ENCODE measurements at regions of chr15 and their contacts with region 1.

Region 1: DNA sequence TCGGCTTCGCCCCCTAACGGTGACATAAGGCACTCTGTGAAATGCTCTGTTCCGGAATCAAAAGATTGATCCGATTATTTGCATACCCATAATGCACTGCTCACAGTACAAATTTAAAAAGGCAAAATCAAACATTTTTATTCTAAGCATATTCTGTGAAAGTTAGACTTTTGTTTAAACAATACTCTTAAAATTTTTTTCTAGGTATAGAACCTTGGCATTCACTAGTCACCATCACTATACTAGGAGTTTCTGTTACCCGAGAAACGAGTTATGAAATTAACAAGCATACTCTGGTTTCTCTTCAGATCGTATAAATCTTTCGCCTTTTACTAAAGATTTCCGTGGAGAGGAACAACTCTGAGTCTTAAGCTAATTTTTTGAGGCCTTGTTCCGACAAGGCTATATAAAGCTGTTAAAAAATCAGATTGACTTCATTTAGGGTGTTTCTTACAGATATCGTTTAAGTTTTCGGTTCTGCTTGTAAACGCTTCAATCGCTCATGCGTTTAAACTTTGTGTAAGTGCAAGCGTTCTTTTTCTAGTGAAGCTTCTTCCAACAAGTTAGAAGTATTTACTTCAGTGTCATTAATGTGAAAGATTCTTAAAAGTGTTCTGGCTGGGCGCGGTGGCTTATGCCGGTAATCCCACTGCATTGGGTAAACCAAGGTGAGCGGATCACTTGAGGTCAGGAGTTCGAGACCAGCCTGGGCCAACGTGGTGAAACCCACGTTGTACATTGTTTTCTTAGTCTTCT is at the start of gene RNU5B-1:
- DNase-seq: peak; percentile 76 to 93 (median 80)
- ATAC-seq: peak; percentile 92
- H3K4me3 ChIP-seq: peak within 1 kb of the TSS; percentile 28
- H3K27ac ChIP-seq: peak within 1 kb of the TSS; percentile 93
- H3K4me1 ChIP-seq: peaks cover 14 to 15% of the 10 kb centered on the region in 2 experiments
- H3K27me3 ChIP-seq: no peaks in the 10 kb centered on the region
- CTCF ChIP-seq: peak; percentile 72 to 92 (median 88)
- EP300 ChIP-seq: peak; percentile 72
- POLR2A ChIP-seq: peak; percentile 100
- RAD21 ChIP-seq: peak; percentile 5 to 27; a peak in 3 of 4 replicates
- polyA plus RNA-seq, gene RNU5B-1: not detected

Region 2: DNA sequence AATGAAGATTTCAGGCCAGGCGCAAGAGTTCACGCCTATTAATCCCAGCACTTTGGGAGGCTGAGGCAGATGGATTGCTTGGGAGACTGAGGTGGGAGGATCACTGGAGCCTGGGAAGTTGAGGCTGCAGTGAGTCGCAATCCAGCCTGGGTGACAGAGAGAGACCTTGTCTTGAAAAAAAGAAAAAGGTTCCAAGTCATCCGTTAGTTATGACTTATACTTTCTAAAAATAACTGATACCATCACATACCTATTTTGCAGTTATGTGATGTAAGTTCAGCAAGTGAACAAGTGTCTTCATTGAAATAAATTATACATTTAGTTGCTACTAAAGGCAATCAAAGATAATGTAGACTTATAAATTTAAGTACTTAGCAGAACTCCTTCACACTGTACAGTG is 141.5 kb before region 1 on chr15:
- CTCF ChIA-PET with region 1: no interaction called
- POLR2A ChIA-PET with region 1: interaction called, 14 read pairs
- in situ Hi-C with region 1: no loop called
- intact Hi-C with region 1: no loop called
- DNase-seq: no peak
- ATAC-seq: no peak
- H3K4me3 ChIP-seq: no peak overlapping the region
- H3K27ac ChIP-seq: no peak overlapping the region
- H3K4me1 ChIP-seq: no peaks in the 10 kb centered on the region
- H3K27me3 ChIP-seq: no peaks in the 10 kb centered on the region
- CTCF ChIP-seq: no peak
- EP300 ChIP-seq: no peak
- POLR2A ChIP-seq: no peak
- RAD21 ChIP-seq: no peak

Region 3: GRCh38 chr15:65212097-65212496 is 92.5 kb before region 1 on chr15:
- CTCF ChIA-PET with region 1: no interaction called
- POLR2A ChIA-PET with region 1: interaction called, 54 read pairs
- in situ Hi-C with region 1: no loop called
- intact Hi-C with region 1: no loop called
- DNase-seq: peak; percentile 88 to 94 (median 90)
- ATAC-seq: peak; percentile 95
- H3K4me3 ChIP-seq: no peak overlapping the region
- H3K27ac ChIP-seq: no peak overlapping the region
- H3K4me1 ChIP-seq: peaks cover 17 to 24% of the 10 kb centered on the region in 2 experiments; a peak in 3 of 5 replicates
- H3K27me3 ChIP-seq: peaks cover 8 to 11% of the 10 kb centered on the region in 2 experiments; a peak in 4 of 5 replicates
- CTCF ChIP-seq: peak; percentile 89 to 92 (median 89)
- EP300 ChIP-seq: peak; percentile 75
- POLR2A ChIP-seq: no peak
- RAD21 ChIP-seq: peak; percentile 65 to 81

Region 4: GRCh38 chr15:65275728-65276126 is 28.8 kb before region 1 on chr15:
- CTCF ChIA-PET with region 1: no interaction called
- POLR2A ChIA-PET with region 1: interaction called, 18 read pairs
- in situ Hi-C with region 1: no loop called
- intact Hi-C with region 1: no loop called
- DNase-seq: peak; percentile 37 to 48 (median 42)
- ATAC-seq: no peak; the same call in 2 of the 3 replicates
- H3K4me3 ChIP-seq: no peak overlapping the region
- H3K27ac ChIP-seq: no peak overlapping the region
- H3K4me1 ChIP-seq: peaks cover 4 to 11% of the 10 kb centered on the region in 2 experiments; a peak in 4 of 5 replicates
- H3K27me3 ChIP-seq: no peaks in the 10 kb centered on the region
- CTCF ChIP-seq: no peak
- EP300 ChIP-seq: peak; percentile 63
- POLR2A ChIP-seq: no peak
- RAD21 ChIP-seq: no peak

Region 5: DNA sequence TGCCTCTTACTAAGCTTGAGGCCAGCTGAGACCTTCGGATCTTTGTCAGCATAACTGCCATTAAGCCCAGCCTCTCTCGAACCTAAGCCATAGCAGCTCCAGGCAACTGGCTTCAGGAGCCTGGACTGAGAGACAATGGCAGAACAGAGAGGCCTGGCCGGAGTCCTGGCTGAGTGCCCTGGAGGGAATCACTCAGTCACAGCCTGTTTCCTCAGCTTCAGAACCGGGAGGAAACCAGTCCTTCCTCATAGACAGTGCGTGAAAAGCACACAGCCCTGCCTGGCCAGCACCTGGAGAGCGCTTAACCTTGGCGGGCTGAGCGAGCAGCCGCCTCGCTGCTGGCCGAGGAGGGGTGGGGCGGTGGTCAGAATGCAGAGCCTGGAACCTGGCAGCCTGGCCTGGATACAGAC is 21.6 kb after region 1 on chr15:
- CTCF ChIA-PET with region 1: no interaction called
- POLR2A ChIA-PET with region 1: interaction called, 194 read pairs
- in situ Hi-C with region 1: no loop called
- intact Hi-C with region 1: no loop called
- DNase-seq: no peak
- ATAC-seq: no peak
- H3K4me3 ChIP-seq: no peak overlapping the region
- H3K27ac ChIP-seq: no peak overlapping the region
- H3K4me1 ChIP-seq: peaks cover 0 to 21% of the 10 kb centered on the region in 2 experiments; a peak in 2 of 5 replicates
- H3K27me3 ChIP-seq: peaks cover 19 to 48% of the 10 kb centered on the region in 2 experiments; a peak in 4 of 5 replicates
- CTCF ChIP-seq: no peak
- EP300 ChIP-seq: no peak
- POLR2A ChIP-seq: no peak
- RAD21 ChIP-seq: no peak

Region 6: DNA sequence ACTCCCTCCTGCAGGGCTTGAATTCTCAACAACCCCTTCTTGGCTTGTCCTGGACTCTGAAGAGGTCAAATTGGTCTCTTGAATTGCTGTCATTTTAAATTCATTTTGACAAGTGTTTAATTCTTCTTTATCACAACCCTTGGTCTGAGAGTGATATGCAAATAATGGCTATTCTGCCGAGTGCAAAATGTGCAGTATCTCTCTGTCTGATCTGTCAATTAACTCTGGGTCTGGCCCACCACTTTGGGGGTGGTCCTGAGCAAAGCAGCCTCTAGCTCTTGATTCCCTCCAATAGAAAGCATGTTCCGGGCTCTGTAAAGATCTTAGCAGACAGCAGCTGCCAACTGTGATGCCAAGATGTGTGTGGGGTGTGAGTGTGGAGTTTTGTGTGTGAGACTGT is 75.4 kb after region 1 on chr15:
- CTCF ChIA-PET with region 1: no interaction called
- POLR2A ChIA-PET with region 1: interaction called, 21 read pairs
- in situ Hi-C with region 1: no loop called
- intact Hi-C with region 1: no loop called
- DNase-seq: no peak
- ATAC-seq: no peak
- H3K4me3 ChIP-seq: no peak overlapping the region
- H3K27ac ChIP-seq: no peak overlapping the region
- H3K4me1 ChIP-seq: peaks cover 1 to 21% of the 10 kb centered on the region in 2 experiments; a peak in 3 of 5 replicates
- H3K27me3 ChIP-seq: peaks cover 62 to 70% of the 10 kb centered on the region in 2 experiments
- CTCF ChIP-seq: no peak
- EP300 ChIP-seq: no peak
- POLR2A ChIP-seq: no peak
- RAD21 ChIP-seq: no peak

Measured in K562 (cell line).